Transverse colon (tissue), 4 donors: ENCODE measurements at regions of chr1 and their contacts with region 1.

Region 1: DNA sequence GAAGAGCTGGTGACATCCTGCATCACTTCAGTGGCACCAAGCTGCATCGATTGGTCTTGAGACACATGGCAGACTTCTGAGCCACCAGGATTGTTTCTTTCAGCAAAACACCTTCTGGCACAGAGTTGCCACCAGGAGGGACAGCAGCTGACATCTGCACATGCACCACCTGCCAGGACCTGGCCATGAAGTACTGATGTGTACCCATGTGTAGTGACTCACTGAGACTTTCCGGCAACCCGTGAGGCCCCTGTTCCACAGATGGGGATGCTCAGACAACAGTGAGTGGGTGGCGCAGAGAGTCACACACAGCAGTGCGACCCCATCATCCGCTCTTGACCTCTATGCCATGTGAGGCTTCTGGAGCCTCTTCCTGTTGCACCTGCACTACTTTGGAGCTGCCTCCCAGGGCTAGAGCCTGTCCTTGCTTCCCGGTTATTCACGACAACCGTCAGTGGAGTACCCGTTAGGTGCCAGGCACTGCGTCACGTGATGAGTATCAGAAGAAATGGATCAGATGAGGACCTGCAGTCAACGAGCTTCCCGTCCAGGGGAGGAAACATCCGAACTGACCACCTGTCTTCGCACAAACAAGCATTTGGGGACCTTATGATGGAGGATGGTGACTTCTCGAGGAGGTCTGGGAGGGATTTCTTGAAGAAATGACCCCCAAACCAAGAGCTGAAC is 80.5 kb upstream of the VAMP3 start:
- DNase-seq: no peak
- H3K4me3 ChIP-seq: no peak overlapping the region
- H3K27ac ChIP-seq: no peak overlapping the region
- H3K4me1 ChIP-seq: no peaks in the 10 kb centered on the region
- H3K27me3 ChIP-seq: no peaks in the 10 kb centered on the region
- CTCF ChIP-seq: no peak
- EP300 ChIP-seq: no peak
- POLR2A ChIP-seq: no peak

Region 2: DNA sequence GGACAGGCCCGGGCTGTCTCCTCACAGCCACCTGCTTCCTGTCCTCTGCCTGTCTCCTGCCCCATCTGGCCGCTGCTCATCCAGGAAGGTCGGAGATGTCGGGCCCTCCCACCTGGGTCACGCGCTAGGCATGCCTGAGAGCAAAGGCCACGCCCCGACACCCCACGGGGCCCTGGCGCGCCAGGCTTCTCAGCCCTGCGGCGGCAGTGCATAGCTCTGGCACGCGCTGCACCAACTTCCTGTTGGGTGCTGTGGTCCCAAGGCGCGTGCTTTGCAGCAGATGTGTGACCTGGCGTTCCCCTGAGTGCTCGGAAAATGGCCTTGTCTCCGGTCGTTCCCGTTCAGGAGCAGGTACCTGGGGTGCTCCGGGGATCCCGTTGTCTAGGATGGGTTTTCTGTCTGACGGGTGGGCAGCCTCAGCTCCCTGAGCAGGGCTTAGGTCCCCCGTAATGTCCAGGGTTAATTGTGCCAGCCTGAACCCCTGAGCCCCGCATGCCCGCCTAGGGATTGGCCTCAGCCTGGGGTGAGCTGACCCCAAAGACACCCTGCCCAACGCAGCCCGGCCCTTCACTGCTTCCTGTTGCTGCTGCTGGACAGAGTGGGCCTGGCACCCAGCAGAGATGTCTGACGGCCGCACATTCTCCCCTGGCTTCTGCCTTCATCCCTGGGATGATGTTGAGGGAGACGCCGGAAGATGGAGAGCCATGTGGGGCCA is 1664.4 kb before region 1 on chr1:
- in situ Hi-C with region 1: no loop called
- intact Hi-C with region 1: loop called (anchors 5 kb)
- DNase-seq: peak; percentile 93
- H3K4me3 ChIP-seq: peak overlapping the region in 3 of 4 donors; percentile 10 to 41 (median 19)
- H3K27ac ChIP-seq: peak overlapping the region; percentile 42 to 73 (median 58)
- H3K4me1 ChIP-seq: peaks cover 3 to 10% (median 9%) of the 10 kb centered on the region in 4 donors
- H3K27me3 ChIP-seq: peaks cover 10% of the 10 kb centered on the region
- CTCF ChIP-seq: no peak
- EP300 ChIP-seq: no peak
- POLR2A ChIP-seq: peak; percentile 57